ENCODE measurements at regions of chr19 and their contacts with region 1.

Region 1: GRCh38 chr19:28670836-28671235 is 542.1 kb downstream of the UQCRFS1 start:
- DNase-seq: no peak
- H3K4me3 ChIP-seq: no peak overlapping the region
- H3K27ac ChIP-seq: no peak overlapping the region
- H3K4me1 ChIP-seq: no peaks in the 10 kb centered on the region
- H3K27me3 ChIP-seq: no peaks in the 10 kb centered on the region
- CTCF ChIP-seq: no peak
- EP300 ChIP-seq: no peak
- POLR2A ChIP-seq: no peak

Region 2: DNA sequence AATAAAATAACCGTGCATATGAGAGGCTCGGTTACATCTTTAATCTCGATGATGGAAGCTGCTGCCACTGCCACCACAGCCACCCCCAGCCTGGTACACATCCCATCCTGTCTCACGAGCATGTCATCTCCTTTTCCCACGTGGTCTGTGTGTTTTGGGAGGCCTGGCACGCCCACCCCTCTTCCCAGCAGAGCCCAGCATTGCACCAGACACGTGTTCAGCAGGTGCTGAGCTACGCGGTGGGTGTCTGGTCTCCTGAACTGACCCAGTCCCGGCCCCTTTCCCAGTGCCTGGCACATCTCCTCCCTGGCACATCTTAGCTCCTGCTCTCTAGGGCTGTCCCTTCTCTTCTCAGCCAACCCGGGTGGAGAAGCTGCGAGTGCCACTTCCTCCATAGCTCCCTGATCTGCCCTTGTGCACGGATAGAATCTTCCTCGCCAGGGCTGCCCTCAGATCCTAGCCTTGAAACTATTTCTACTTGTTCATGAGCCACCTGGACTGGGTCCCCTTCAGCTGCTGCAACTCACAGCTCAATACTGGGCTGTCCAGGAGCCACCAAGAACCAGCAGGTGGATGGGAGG is 1664.6 kb after region 1 on chr19:
- in situ Hi-C with region 1: no loop called
- intact Hi-C with region 1: loop called (anchors 10 kb)
- DNase-seq: no peak
- H3K4me3 ChIP-seq: no peak overlapping the region
- H3K27ac ChIP-seq: no peak overlapping the region
- H3K4me1 ChIP-seq: peaks cover 0 to 5% (median 0%) of the 10 kb centered on the region in 4 donors
- H3K27me3 ChIP-seq: no peaks in the 10 kb centered on the region
- CTCF ChIP-seq: no peak
- EP300 ChIP-seq: no peak
- POLR2A ChIP-seq: no peak

Measured in transverse colon (tissue), 4 donors.